Psoas muscle (tissue), 8 donors: ENCODE measurements at regions of chr2 and their contacts with region 1.

Region 1: DNA sequence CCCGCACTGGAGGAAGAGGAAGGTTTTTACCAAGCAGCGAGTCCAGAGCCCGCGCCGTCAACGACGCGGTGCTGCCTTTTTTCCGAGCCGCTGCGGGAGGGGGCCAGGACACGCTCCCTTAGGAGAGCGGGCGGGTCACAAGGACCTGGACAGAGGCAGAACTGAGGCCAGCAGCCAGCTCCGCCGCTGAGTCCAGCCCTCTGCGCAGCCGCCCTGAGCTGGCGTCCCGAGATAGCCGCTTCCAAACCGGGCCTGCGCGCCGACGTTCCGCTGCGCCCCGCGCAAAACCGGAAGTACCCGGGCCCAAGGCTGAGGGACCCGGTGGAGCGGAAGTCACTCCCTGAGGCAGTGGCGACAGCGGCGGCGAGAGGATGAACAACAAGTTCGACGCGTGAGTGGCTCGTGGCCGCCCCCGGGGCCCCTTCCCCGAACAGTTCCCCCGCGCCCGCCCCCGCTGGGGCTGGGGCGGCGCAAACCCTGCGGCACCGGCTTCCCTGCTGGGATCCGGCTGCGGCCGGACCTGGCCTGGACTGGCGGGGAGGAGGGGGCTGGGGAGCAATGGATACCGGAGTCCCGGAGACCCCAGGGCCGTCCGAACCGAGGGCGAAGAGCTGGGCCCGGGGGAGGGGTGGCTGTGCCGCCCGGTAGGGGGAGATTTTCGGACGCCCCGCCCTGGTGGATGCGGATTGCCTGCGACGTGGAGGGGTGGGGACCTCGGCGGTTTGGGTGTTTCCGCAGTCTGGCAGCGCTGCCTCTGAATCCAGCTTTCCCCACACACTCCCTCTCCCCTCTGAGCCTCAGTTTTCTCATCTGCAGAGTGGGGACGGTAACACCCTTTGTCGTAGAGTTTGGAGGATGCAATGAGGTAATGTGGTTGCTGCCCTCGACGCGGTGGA is at the starts of genes EIF4E2 and TIGD1:
- DNase-seq: peak; percentile 96 to 98
- ATAC-seq: peak; percentile 94 to 98 (median 96)
- H3K4me3 ChIP-seq: peak within 1 kb of the TSS; percentile 97
- H3K27ac ChIP-seq: peak within 1 kb of the TSS; percentile 99
- H3K4me1 ChIP-seq: peaks cover 38% of the 10 kb centered on the region
- H3K27me3 ChIP-seq: no peaks in the 10 kb centered on the region
- CTCF ChIP-seq: peak; percentile 28
- total RNA-seq, gene EIF4E2: 76.1 to 136 (median 88.4) TPM
- total RNA-seq, gene TIGD1: 2.3 to 4.9 (median 3.7) TPM

Region 2: DNA sequence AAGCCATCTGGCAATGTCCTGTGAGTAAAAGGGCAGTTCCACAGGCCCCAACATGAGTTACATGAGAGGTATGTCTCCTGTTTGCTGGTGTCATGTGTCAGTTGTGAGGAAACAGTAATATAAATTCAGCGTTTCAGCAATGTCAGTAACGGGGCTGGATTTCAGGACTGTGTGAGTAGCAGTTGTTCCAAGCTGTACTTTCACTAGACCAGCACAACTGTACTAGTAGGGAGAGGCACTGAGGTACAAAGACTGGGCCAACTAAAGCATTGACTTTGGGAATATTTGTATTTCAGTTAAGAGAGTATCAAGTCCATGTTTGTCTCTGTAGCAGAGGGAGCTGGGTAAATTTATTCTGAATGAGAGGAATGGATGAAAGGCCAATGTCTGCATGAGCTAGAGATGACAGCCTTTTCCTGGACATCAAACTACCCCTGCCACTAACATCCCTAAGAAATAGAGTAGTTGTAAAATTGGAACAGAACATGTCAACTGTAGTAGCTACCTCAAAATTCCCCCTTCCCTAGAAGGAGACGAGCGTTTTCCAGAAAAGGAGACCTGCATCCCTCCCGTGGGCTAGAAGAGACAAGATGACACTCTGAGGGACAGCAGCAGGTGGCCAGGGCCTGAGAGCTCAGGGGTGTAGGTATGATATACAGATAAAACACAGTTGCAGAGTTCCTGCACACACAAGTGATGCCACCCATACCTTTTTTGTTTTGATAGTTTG is 24.2 kb after region 1 on chr2:
- intact Hi-C with region 1: loop called in 1 of 2 experiments (anchors 2 kb)
- DNase-seq: peak; percentile 46 to 88
- ATAC-seq: peak; percentile 83 to 87 (median 84)
- H3K4me3 ChIP-seq: peak overlapping the region; percentile 67
- H3K27ac ChIP-seq: peak overlapping the region; percentile 92
- H3K4me1 ChIP-seq: peaks cover 44% of the 10 kb centered on the region
- H3K27me3 ChIP-seq: no peaks in the 10 kb centered on the region
- CTCF ChIP-seq: no peak